Naive thymus-derived CD4-positive, alpha-beta T cell (primary cell): ENCODE measurements at regions of chrX and their contacts with region 1.

Region 1: GRCh38 chrX:153470435-153471363 is at the start of gene HAUS7:
- DNase-seq: peak; percentile 73 to 88 (median 85)
- ATAC-seq: peak; percentile 92
- H3K4me3 ChIP-seq: peak within 1 kb of the TSS; percentile 74
- H3K4me3 Mint-ChIP-seq: peak within 1 kb of the TSS; percentile 64 to 88 (median 82)
- H3K27ac ChIP-seq: peak within 1 kb of the TSS; percentile 68
- H3K27ac Mint-ChIP-seq: peak within 1 kb of the TSS in 8 of 9 donors; percentile 62 to 85 (median 82)
- H3K4me1 ChIP-seq: peaks cover 3 to 17% of the 10 kb centered on the region in 2 donors
- H3K4me1 Mint-ChIP-seq: peaks cover 0 to 30% (median 12%) of the 10 kb centered on the region in 7 donors
- H3K27me3 ChIP-seq: no peaks in the 10 kb centered on the region
- H3K27me3 Mint-ChIP-seq: no peaks in the 10 kb centered on the region
- total RNA-seq, gene HAUS7: 23.2 to 44.8 (median 31.4) TPM

Region 2: GRCh38 chrX:153032397-153033118 is 438.1 kb before region 1 on chrX:
- CTCF ChIA-PET with region 1: interaction called, 3 read pairs
- POLR2A ChIA-PET with region 1: no interaction called
- intact Hi-C with region 1: loop called (anchors 1 to 2 kb)
- DNase-seq: peak; percentile 32 to 75 (median 53)
- ATAC-seq: peak; percentile 87
- H3K4me3 ChIP-seq: peak overlapping the region; percentile 69
- H3K4me3 Mint-ChIP-seq: peak overlapping the region; percentile 78 to 90 (median 86)
- H3K27ac ChIP-seq: peak overlapping the region; percentile 53
- H3K27ac Mint-ChIP-seq: peak overlapping the region; percentile 68 to 93 (median 87)
- H3K4me1 ChIP-seq: peaks cover 7 to 9% of the 10 kb centered on the region in 2 donors
- H3K4me1 Mint-ChIP-seq: peaks cover 0 to 11% (median 4%) of the 10 kb centered on the region in 7 donors
- H3K27me3 ChIP-seq: no peaks in the 10 kb centered on the region
- H3K27me3 Mint-ChIP-seq: no peaks in the 10 kb centered on the region

Region 3: DNA sequence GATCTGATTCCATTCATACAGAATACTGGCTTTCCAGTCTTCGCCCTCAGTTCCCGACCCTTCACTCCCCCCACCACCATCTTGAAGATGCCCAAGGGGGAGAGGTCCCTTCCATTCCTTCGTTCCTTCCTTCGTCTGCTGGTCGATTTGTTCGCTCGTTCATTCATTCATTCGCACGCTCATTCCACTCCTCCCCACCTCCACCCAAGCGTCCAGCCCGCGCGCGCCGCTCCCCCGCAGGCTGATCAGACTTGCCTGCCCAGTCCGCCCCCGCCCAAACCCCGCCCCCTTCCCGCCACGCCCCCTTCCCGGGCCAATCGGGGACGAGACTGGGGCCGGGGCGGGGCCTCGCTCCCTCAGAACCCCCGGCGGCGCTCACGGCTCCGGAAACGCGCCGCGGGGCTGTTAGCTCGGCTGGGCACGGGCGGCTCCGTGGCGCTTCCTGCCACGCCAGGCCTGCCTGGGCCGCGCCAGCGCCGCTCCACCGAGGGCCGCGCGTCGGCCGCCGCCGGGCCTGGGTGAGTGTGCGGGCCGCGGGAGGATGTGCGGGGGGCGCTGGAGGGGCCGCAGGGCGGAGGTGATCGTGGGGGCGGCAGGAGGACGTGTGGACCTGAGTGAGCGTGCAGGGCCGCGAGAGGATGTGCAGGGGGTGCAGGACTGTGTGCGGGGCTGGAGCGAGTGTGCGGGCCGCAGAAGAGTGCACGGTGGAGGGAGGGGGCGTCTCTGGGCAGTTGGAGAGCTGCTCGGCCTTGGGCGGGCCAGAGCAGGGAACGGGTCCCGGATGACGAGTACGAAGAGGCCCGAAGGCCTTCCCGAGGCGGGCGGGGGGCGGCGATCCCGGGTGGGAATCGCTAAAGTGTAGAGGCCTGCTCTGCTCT is 136.7 kb before region 1 on chrX and contains the start of gene ZNF275:
- CTCF ChIA-PET with region 1: no interaction called
- POLR2A ChIA-PET with region 1: interaction called, 3 read pairs
- intact Hi-C with region 1: loop called (anchors 1 to 2 kb)
- DNase-seq: peak; percentile 69 to 85 (median 81)
- ATAC-seq: peak; percentile 99
- H3K4me3 ChIP-seq: peak within 1 kb of the TSS; percentile 56
- H3K4me3 Mint-ChIP-seq: peak within 1 kb of the TSS; percentile 71 to 93 (median 86)
- H3K27ac ChIP-seq: peak within 1 kb of the TSS; percentile 82
- H3K27ac Mint-ChIP-seq: peak within 1 kb of the TSS; percentile 76 to 87 (median 84)
- H3K4me1 ChIP-seq: peaks cover 0 to 34% of the 10 kb centered on the region in 2 donors
- H3K4me1 Mint-ChIP-seq: peaks cover 17 to 48% (median 43%) of the 10 kb centered on the region in 7 donors
- H3K27me3 ChIP-seq: no peaks in the 10 kb centered on the region
- H3K27me3 Mint-ChIP-seq: peaks cover 0 to 3% (median 0%) of the 10 kb centered on the region in 5 donors
- total RNA-seq, gene ZNF275: 14.6 to 29.9 (median 18.5) TPM

Region 4: GRCh38 chrX:153494541-153495361 is 24.1 kb after region 1 on chrX and contains the start of gene BGN:
- CTCF ChIA-PET with region 1: no interaction called
- POLR2A ChIA-PET with region 1: no interaction called
- intact Hi-C with region 1: loop called in 1 of 2 experiments (anchors 1 kb)
- DNase-seq: peak in 4 of 9 donors; percentile 4 to 18 (median 12)
- ATAC-seq: no peak
- H3K4me3 ChIP-seq: no peak within 1 kb of the TSS
- H3K4me3 Mint-ChIP-seq: peak within 1 kb of the TSS in 3 of 10 donors; percentile 35 to 68 (median 61)
- H3K27ac ChIP-seq: no peak within 1 kb of the TSS
- H3K27ac Mint-ChIP-seq: no peak within 1 kb of the TSS
- H3K4me1 ChIP-seq: no peaks in the 10 kb centered on the region
- H3K4me1 Mint-ChIP-seq: peaks cover 0 to 3% (median 0%) of the 10 kb centered on the region in 7 donors
- H3K27me3 ChIP-seq: no peaks in the 10 kb centered on the region
- H3K27me3 Mint-ChIP-seq: peaks cover 0 to 5% (median 0%) of the 10 kb centered on the region in 5 donors
- total RNA-seq, gene BGN: not detected

Region 5: DNA sequence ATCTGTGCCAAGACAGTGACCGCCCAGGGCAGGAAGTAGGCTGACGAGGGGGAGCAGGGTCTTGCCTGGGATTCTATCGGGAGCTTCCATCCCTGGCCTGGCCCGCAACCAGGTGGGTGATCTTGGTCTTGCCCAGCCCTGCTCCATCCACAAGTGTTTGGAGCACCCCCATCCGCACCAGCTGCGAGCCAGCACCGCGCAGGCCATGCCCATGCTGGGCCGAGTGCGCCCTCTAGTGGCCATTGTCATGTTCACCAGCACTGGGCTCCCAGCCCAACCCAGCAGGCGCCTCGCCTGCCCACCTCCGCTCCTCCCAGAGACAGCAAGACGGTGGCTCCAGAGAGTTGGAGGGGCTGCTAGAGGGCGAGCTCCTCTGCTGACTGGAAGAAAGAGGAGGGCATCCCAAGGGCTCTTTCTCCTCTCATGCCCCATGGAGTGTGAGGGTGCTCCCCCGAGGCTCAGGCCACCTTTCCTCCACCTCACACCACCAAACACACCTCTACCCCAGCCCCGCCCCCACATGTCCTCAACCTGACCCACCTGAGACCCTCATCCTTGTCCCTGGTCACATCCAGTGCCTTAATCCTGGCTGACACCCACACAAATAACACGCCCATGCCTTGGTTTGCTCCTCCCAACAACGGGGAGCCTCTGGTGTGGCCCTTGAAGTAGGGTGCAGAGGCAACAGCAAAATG is 36.9 kb after region 1 on chrX:
- CTCF ChIA-PET with region 1: interaction called, 11 read pairs
- POLR2A ChIA-PET with region 1: interaction called, 4 read pairs
- intact Hi-C with region 1: loop called (anchors 1 kb)
- DNase-seq: peak; percentile 67 to 83 (median 77)
- ATAC-seq: peak; percentile 99
- H3K4me3 ChIP-seq: no peak overlapping the region
- H3K4me3 Mint-ChIP-seq: peak overlapping the region in 2 of 10 donors; percentile 9 to 13
- H3K27ac ChIP-seq: no peak overlapping the region
- H3K27ac Mint-ChIP-seq: peak overlapping the region in 2 of 9 donors; percentile 32 to 46
- H3K4me1 ChIP-seq: peaks cover 0 to 4% of the 10 kb centered on the region in 2 donors
- H3K4me1 Mint-ChIP-seq: peaks cover 0 to 6% (median 0%) of the 10 kb centered on the region in 7 donors
- H3K27me3 ChIP-seq: no peaks in the 10 kb centered on the region
- H3K27me3 Mint-ChIP-seq: no peaks in the 10 kb centered on the region

Region 6: DNA sequence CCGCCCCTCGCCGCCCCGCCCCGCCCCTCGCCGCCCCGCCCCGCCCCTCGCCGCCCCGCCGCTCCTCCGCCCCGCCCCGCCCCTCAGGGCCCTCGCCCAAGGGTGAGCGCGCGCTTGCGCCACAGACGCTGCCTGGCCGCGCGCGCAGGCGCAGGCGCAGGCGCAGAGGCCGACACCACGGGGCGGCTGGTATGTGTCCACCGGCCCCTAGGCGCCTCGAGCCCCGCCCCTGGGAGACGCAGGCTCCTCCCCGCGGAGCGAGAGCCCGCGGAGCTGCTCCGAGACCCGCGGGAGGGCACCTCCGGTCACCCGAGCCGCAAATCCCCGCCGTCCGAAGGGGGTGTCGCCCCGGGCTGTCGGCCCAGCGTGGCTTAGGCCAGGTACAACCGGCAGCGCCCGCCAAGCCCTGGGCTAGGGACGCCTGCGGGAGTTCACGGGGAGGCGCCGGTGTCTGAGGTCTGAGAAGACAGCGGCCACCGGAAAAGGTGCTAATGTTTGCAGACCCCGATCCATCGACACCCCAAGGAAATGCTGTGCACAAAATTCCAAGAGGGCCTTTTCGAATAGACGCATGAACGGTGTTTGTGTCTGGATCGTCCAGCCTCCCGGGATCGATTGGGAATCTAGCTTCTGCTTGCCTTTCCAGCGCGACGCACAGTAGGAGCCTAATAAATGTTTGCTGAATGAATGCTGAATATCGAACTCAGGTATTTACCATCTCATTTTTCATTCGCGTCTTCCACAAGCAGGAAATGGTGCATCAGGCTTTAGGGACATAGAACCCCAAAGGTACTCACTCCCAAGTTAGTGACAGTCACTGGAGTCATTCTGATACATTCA is 128.7 kb after region 1 on chrX:
- CTCF ChIA-PET with region 1: no interaction called
- POLR2A ChIA-PET with region 1: no interaction called
- intact Hi-C with region 1: loop called (anchors 1 to 2 kb)
- DNase-seq: peak; percentile 77 to 91 (median 82)
- ATAC-seq: peak; percentile 94
- H3K4me3 ChIP-seq: peak overlapping the region; percentile 69
- H3K4me3 Mint-ChIP-seq: peak overlapping the region; percentile 79 to 93 (median 90)
- H3K27ac ChIP-seq: peak overlapping the region; percentile 74
- H3K27ac Mint-ChIP-seq: peak overlapping the region in 7 of 9 donors; percentile 48 to 83 (median 64)
- H3K4me1 ChIP-seq: peaks cover 19 to 21% of the 10 kb centered on the region in 2 donors
- H3K4me1 Mint-ChIP-seq: peaks cover 23 to 60% (median 46%) of the 10 kb centered on the region in 7 donors
- H3K27me3 ChIP-seq: no peaks in the 10 kb centered on the region
- H3K27me3 Mint-ChIP-seq: no peaks in the 10 kb centered on the region